Activated T-helper 2 cell treated with anti-CD3 and anti-CD28 coated beads, Interferon-gamma antibody, Interleukin-2, Interleukin-4, amounts not matched to agents 10 μg/mL and 5 μg/mL and 100 μg/mL, durations not matched to agents 14 hours and 24 hours and 36 hours (primary cell): ENCODE measurements at regions of chr4 and their contacts with region 1.

Region 1: DNA sequence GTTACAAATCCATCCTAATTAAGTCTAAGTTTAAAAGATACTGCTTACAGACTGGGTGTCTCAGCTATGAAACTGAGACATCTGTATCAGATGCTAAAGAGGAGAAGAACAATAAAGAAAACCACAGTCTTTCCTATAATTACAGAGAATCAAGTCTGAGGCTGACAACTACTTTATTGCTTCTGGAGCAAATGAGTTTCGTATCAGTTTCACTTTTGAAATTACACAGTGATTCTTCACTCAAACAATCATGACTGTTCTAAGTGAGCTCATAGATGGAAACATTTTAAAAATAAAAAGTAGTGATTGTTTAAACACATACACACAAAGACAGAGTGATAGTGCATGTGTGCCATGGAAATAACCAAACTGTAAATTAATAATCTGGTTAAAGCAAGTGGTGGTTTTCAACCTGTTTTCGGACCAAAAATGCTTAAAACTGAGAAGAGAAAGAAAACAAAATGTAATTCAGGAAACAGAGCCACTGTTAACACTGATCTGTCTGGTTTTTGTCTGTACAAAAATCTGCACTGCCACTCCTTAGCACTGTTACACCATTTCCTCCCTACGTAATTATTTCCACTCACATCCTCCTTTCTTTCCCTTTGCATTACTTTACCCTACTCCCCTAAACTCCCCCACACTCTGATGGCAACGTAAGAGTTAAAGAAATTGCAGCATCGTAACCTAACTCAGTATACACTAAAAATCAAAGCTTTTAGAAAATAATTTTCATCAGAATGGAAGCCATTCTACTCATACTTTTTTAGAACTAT is 12.5 kb downstream of the RFC1 start:
- DNase-seq: no peak
- H3K4me3 Mint-ChIP-seq: peak overlapping the region; percentile 72
- H3K27ac Mint-ChIP-seq: peak overlapping the region; percentile 93
- H3K4me1 Mint-ChIP-seq: peaks cover 52% of the 10 kb centered on the region
- H3K27me3 Mint-ChIP-seq: no peaks in the 10 kb centered on the region

Region 2: DNA sequence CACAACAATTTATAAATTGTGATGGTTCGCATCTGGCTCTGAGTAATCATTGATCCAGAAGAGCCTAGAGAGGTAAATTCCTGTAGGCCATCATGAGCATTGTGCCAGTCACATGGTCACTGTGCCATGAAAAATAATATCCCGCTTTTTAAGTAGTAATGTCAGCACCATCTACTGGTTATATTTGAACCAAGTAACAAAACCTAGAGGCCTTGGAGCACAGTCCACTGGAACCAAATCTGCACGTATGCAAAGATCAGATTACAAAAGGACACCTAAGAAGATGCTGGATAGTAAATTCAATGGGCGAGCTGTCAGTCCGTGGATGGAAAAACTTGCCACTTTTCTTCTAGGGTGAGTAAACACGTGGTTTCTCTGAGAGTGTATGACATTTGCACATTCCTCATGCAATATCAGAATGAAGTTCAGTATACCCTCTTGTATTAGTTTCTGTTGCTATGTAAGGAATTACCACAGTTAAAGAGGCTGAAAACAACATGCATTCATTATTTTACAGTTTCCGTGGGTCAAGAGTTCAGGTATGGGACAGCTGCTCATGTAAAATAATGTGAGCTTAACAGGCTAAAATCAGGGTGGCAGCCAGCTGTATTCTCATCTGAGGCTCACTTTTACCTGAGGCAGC is 459.2 kb before region 1 on chr4:
- intact Hi-C with region 1: loop called (anchors 5 kb)
- DNase-seq: no peak
- H3K4me3 Mint-ChIP-seq: no peak overlapping the region
- H3K27ac Mint-ChIP-seq: no peak overlapping the region
- H3K4me1 Mint-ChIP-seq: peaks cover 18% of the 10 kb centered on the region
- H3K27me3 Mint-ChIP-seq: no peaks in the 10 kb centered on the region

Region 3: GRCh38 chr4:39032218-39033085 is 321.2 kb before region 1 on chr4 and contains the start of gene TMEM156:
- intact Hi-C with region 1: loop called (anchors 5 kb)
- DNase-seq: no peak
- H3K4me3 Mint-ChIP-seq: peak within 1 kb of the TSS; percentile 86
- H3K27ac Mint-ChIP-seq: peak within 1 kb of the TSS; percentile 80
- H3K4me1 Mint-ChIP-seq: peaks cover 45% of the 10 kb centered on the region
- H3K27me3 Mint-ChIP-seq: no peaks in the 10 kb centered on the region
- total RNA-seq, gene TMEM156: 17.6 and 17.8 TPM in 2 replicates

Region 4: DNA sequence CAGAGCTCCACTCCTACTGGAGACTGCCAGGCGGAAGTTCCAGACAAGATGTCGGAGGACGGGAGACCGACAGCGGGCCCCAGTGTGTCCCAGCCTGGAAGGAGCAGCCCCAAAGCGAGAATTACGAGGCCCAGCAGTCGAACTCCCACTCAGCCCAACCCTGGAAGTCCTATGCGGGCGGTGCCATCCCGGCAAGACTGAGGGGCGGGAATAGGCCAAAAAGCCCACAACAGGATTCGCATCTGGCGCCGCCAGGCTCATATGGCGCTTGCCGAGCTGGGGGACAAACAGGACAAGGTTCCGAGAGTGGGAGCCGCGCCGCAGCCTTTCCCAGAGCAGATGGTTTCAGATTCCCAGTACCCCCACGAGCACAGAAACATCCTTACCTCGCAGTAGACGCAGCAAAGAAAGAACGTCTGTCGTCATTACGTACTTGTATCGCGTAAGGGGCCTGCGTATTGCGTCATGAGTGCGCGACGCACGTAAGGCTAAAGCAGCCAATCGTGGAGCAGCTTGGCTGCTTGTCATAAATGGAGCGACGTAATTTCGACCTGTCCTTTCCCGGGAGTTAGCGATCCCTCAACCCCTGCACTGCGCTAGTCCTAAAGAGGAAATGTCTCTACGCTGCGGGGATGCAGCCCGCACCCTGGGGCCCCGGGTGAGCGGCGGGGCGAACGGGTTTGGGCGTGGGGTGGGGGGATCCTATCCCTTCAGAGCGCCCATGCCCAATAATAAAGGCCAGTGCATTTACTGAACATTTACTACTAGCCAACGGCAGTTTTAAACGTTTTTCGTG is 105.0 kb after region 1 on chr4 and contains the starts of genes LIAS and RPL9:
- intact Hi-C with region 1: loop called (anchors 2 kb)
- DNase-seq: peak; percentile 93
- H3K4me3 Mint-ChIP-seq: peak within 1 kb of the TSS; percentile 95
- H3K27ac Mint-ChIP-seq: peak within 1 kb of the TSS; percentile 98
- H3K4me1 Mint-ChIP-seq: peaks cover 23% of the 10 kb centered on the region
- H3K27me3 Mint-ChIP-seq: no peaks in the 10 kb centered on the region
- total RNA-seq, gene LIAS: 19.1 and 19.8 TPM in 2 replicates
- total RNA-seq, gene RPL9: 1,761 and 1,779 TPM in 2 replicates

Region 5: GRCh38 chr4:40056716-40057585 is 703.3 kb after region 1 on chr4 and contains the start of gene N4BP2:
- intact Hi-C with region 1: loop called (anchors 5 kb)
- DNase-seq: peak; percentile 68
- H3K4me3 Mint-ChIP-seq: peak within 1 kb of the TSS; percentile 96
- H3K27ac Mint-ChIP-seq: peak within 1 kb of the TSS; percentile 99
- H3K4me1 Mint-ChIP-seq: peaks cover 25% of the 10 kb centered on the region
- H3K27me3 Mint-ChIP-seq: no peaks in the 10 kb centered on the region
- total RNA-seq, gene N4BP2: 23.2 and 23.8 TPM in 2 replicates